AG04449 (cell line): ENCODE measurements at regions of chr16 and their contacts with region 1.

Region 1: DNA sequence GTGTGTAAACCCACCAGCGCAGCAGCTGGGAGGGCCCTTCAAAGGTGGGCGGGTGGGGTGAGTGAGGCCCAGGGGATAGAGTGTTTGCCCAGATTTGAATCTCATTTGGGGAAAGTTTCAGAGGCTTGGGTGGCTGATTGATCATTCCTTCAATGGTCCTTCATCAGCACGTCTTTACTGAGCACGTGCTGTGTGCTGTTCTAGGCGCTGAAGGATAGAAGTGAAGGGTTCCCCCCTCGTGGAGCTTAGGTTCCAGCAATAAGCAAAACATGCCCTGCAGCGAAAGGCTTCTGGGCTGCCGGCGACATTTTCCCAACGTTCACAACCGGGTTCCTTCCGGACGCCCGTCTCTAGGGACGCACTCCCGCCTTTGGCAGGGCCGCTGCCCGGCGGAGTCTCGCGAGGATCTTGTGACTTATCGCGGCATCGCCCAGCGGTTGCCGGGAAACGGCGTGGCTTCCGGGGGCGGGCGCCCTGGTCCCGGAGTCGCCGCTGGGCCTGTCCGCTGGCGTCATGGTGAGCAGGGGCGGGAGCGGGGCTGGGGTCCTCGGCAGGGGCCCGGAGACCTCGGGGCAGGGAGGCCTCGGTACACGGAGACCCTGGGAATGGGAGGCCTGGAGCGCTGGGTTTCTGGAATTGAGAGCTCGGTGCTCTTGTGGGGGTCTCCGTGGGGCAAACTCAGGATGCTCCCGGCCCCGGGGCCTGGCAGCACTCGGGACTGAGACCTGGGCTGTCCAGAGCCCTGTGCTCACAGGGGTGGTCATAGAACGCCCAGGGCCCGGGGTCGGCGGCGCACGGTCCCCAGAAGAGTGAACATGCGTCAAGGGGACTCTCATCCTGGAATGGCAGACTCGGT is 3.2 kb upstream of the DBNDD1 start:
- DNase-seq: no peak
- H3K4me3 ChIP-seq: peak overlapping the region; percentile 76
- CTCF ChIP-seq: no peak

Region 2: DNA sequence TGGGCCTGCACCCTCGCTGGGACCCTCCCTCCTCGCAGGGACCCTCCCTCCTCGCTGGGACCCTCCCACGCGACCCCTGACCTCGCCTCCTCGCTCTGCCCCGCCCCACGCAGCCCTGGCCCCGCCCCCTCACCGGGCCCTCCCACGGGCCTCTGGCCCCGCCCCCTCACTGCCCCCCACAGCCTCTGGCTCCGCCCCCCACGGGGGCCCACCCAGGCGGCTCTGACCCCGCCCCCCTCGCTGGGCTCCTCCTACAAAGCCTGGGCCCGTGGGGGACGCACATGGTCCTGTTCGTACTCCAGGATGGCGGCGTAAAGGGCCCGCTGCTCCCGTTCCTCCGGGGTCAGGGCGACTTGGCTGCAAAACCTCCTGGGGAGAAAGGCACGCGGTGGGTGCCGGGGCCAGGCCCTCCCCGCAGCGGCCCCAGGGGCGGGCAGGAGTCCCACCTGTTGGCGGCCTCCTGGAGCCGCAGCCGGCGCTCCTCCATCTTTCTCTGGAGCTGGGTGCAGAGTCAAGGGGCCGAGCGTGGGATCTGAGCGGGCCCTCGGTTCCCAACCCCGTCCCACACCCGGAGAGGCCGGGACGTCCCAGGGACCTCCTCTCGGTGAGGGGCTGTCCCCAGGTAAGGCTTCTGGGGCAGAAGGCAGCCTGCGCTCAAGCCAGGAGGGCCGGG is 310.7 kb before region 1 on chr16:
- CTCF ChIA-PET with region 1: no interaction called
- POLR2A ChIA-PET with region 1: no interaction called
- DNase-seq: no peak
- H3K4me3 ChIP-seq: peak overlapping the region; percentile 62
- CTCF ChIP-seq: no peak

Region 3: DNA sequence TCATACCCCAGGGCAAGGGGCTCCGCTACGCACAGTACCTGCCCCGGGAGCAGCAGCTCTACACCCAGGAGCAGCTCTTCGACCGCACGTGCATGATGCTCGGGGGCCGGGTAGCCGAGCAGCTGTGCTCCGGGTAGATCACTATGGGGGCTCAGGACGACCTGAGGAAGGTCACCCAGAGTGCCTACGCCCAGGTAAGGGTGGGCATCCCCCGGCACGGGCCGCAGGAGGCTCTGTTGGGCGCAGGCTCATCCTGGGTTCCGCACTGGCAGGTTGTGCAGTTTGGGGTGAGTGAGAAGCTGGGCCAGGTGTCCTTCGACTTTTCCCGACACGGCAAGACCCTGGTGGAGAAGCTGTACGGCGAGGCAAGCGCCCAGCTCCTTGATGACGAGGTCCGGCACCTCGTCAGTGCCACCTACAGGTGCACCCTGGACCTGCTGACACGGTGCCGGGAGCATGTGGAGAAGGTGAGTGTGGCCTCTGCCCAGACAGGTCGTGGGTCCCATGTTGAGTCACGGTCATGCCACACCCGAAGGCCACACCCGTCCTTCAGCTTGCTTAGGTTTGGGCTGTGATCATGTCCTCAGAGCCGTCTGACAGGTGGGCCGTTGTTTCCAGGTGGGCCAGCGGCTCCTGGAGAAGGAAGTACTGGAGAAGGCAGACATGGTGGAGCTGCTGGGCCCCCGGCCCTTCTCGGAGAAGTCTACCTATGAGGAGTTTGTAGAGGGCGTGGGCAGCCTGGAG is 22.4 kb before region 1 on chr16:
- CTCF ChIA-PET with region 1: interaction called, 14 read pairs
- POLR2A ChIA-PET with region 1: no interaction called
- DNase-seq: no peak
- H3K4me3 ChIP-seq: no peak overlapping the region
- CTCF ChIP-seq: no peak

Region 4: GRCh38 chr16:90010671-90011520 is 11.5 kb before region 1 on chr16:
- CTCF ChIA-PET with region 1: interaction called, 17 read pairs
- POLR2A ChIA-PET with region 1: no interaction called
- DNase-seq: no peak
- H3K4me3 ChIP-seq: no peak overlapping the region
- CTCF ChIP-seq: no peak